Ovary (tissue), 10 donors: ENCODE measurements at regions of chr3 and their contacts with region 1.

Region 1: GRCh38 chr3:377158-377561 is 180.6 kb downstream of the CHL1 start:
- DNase-seq: no peak
- H3K4me3 ChIP-seq: no peak overlapping the region
- H3K27ac ChIP-seq: no peak overlapping the region
- H3K4me1 ChIP-seq: peaks cover 7% of the 10 kb centered on the region
- H3K27me3 ChIP-seq: no peaks in the 10 kb centered on the region
- CTCF ChIP-seq: peak in 2 of 3 donors; percentile 12 to 24
- EP300 ChIP-seq: no peak
- POLR2A ChIP-seq: no peak

Region 2: DNA sequence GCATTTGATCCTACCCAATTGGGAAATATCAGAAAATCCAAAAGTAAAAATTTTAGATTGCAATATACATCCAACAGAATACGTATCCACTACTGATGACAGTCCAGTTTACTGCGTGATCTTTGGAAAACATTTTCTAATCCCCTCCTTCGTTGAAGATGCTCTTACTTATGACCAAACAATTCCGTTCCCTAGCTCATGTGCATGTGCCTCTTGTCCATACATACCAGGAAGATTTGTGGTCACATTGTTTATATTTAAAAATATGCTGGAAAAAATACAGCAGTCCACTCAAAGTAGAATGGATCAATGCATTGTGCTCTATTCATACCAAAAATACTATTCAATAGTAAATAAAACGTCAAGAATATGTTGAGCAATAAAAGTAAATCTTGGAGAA is 45.3 kb before region 1 on chr3:
- intact Hi-C with region 1: loop called in 1 of 4 experiments (anchors 1 kb)
- DNase-seq: no peak
- H3K4me3 ChIP-seq: no peak overlapping the region
- H3K27ac ChIP-seq: no peak overlapping the region
- H3K4me1 ChIP-seq: no peaks in the 10 kb centered on the region
- H3K27me3 ChIP-seq: no peaks in the 10 kb centered on the region
- CTCF ChIP-seq: no peak
- EP300 ChIP-seq: no peak
- POLR2A ChIP-seq: no peak

Region 3: DNA sequence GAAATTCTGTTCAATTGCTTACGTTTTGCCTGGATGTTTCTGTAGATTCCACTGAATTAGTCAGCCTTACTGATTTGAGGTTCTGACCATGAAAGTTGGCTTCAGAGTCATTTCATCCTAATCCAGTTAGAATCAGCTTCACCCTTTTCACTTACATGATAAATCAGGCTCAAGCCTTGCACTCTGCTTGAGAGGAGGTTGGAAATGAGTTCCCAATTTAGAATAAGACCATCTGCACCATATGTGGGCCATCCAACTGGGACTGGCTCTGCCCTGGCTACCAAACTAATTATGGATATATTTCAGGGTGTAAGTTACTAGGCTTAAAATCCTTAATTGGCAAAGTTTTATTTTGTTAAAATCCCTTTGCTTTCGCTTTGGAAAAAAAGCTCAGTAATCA is 75.1 kb after region 1 on chr3:
- intact Hi-C with region 1: no loop called
- DNase-seq: no peak
- H3K4me3 ChIP-seq: no peak overlapping the region
- H3K27ac ChIP-seq: no peak overlapping the region
- H3K4me1 ChIP-seq: peaks cover 1% of the 10 kb centered on the region
- H3K27me3 ChIP-seq: no peaks in the 10 kb centered on the region
- CTCF ChIP-seq: no peak
- EP300 ChIP-seq: no peak
- POLR2A ChIP-seq: no peak